MCF 10A (cell line): ENCODE measurements at regions of chr5 and their contacts with region 1.

Region 1: GRCh38 chr5:53430261-53431252 is 49.9 kb upstream of the FST start:
- DNase-seq: peak; percentile 69
- H3K4me3 Mint-ChIP-seq: no peak overlapping the region
- H3K27ac Mint-ChIP-seq: no peak overlapping the region
- H3K4me1 Mint-ChIP-seq: no peaks in the 10 kb centered on the region
- H3K27me3 Mint-ChIP-seq: no peaks in the 10 kb centered on the region
- CTCF ChIP-seq: peak; percentile 58

Region 2: DNA sequence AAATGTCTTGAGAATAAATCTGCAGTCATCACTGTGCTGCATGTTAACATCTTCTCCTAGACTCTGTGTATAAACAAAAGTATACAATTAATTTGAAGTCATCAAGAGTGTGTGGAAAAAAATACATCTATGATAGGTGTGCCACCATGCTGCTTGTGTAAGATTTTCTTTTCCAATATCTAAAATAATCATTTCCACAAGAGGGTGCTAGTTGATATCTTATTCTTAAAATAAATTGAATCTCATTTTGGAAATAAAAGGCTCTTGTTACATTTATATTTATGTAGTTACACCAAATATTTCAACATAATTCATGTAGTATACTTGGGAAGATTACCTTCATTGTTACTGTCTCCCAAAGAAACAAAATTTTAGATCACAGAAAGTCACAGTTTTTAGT is 306.9 kb before region 1 on chr5:
- CTCF ChIA-PET with region 1: interaction called, 3 read pairs
- POLR2A ChIA-PET with region 1: no interaction called
- intact Hi-C with region 1: loop called (anchors 5 kb)
- DNase-seq: peak; percentile 11
- H3K4me3 Mint-ChIP-seq: no peak overlapping the region
- H3K27ac Mint-ChIP-seq: no peak overlapping the region
- H3K4me1 Mint-ChIP-seq: peaks cover 5% of the 10 kb centered on the region
- H3K27me3 Mint-ChIP-seq: no peaks in the 10 kb centered on the region
- CTCF ChIP-seq: peak; percentile 12

Region 3: GRCh38 chr5:53170748-53171349 is 259.7 kb before region 1 on chr5:
- CTCF ChIA-PET with region 1: interaction called, 9 read pairs
- POLR2A ChIA-PET with region 1: interaction called, 3 read pairs
- intact Hi-C with region 1: loop called (anchors 1 kb)
- DNase-seq: peak; percentile 63
- H3K4me3 Mint-ChIP-seq: no peak overlapping the region
- H3K27ac Mint-ChIP-seq: no peak overlapping the region
- H3K4me1 Mint-ChIP-seq: peaks cover 5% of the 10 kb centered on the region
- H3K27me3 Mint-ChIP-seq: no peaks in the 10 kb centered on the region
- CTCF ChIP-seq: peak; percentile 77

Region 4: DNA sequence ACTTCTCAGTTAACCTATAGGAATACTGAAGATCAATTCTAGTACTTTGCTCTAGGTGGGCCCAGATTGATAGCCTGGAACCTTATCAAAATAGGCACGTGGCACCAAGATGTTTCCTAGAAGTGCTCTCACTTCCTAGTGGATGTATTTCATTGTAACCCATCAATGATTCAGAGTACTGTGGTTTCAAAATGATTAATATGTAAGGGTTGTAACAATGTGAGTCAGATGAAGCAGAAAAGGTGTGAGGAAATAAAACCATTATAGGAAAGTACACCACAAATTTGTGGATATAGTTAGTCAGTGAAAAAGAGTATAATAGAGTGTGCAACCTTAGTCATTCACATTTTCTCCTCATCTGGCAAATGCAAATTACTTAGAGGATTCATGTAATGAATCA is 127.5 kb before region 1 on chr5:
- CTCF ChIA-PET with region 1: interaction called, 3 read pairs
- POLR2A ChIA-PET with region 1: no interaction called
- intact Hi-C with region 1: loop called (anchors 1 kb)
- DNase-seq: peak; percentile 80
- H3K4me3 Mint-ChIP-seq: no peak overlapping the region
- H3K27ac Mint-ChIP-seq: no peak overlapping the region
- H3K4me1 Mint-ChIP-seq: peaks cover 17% of the 10 kb centered on the region
- H3K27me3 Mint-ChIP-seq: no peaks in the 10 kb centered on the region
- CTCF ChIP-seq: no peak

Region 5: GRCh38 chr5:53335115-53335514 is 95.4 kb before region 1 on chr5:
- CTCF ChIA-PET with region 1: no interaction called
- POLR2A ChIA-PET with region 1: interaction called, 5 read pairs
- intact Hi-C with region 1: loop called (anchors 1 kb)
- DNase-seq: peak; percentile 49
- H3K4me3 Mint-ChIP-seq: no peak overlapping the region
- H3K27ac Mint-ChIP-seq: no peak overlapping the region
- H3K4me1 Mint-ChIP-seq: peaks cover 34% of the 10 kb centered on the region
- H3K27me3 Mint-ChIP-seq: no peaks in the 10 kb centered on the region
- CTCF ChIP-seq: peak; percentile 15

Region 6: GRCh38 chr5:53578854-53579253 is 148.3 kb after region 1 on chr5:
- CTCF ChIA-PET with region 1: no interaction called
- POLR2A ChIA-PET with region 1: no interaction called
- intact Hi-C with region 1: no loop called
- DNase-seq: no peak
- H3K4me3 Mint-ChIP-seq: no peak overlapping the region
- H3K27ac Mint-ChIP-seq: no peak overlapping the region
- H3K4me1 Mint-ChIP-seq: peaks cover 11% of the 10 kb centered on the region
- H3K27me3 Mint-ChIP-seq: no peaks in the 10 kb centered on the region
- CTCF ChIP-seq: no peak

Region 7: DNA sequence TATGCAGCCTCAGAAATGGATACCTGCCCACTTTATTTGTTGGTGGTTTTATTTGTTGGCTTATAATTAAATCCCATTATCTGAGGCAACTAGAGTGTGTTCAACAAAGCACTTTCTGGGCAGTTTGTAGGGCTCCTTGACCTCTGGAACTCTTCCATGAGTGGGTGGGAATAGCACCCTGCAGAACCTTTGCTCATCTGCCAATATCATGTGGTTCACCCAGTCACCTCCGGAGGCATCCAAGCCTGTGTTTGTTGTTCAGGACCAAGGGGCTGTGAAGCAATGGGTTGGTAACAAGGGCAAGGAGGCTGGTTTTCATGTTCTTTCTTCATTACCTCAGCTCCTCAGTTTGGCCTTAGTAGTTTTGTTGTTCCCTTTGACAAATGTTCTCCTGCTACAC is 443.9 kb after region 1 on chr5:
- CTCF ChIA-PET with region 1: interaction called, 3 read pairs
- POLR2A ChIA-PET with region 1: no interaction called
- intact Hi-C with region 1: loop called (anchors 2 kb)
- DNase-seq: peak; percentile 43
- H3K4me3 Mint-ChIP-seq: no peak overlapping the region
- H3K27ac Mint-ChIP-seq: no peak overlapping the region
- H3K4me1 Mint-ChIP-seq: no peaks in the 10 kb centered on the region
- H3K27me3 Mint-ChIP-seq: no peaks in the 10 kb centered on the region
- CTCF ChIP-seq: no peak

Region 8: GRCh38 chr5:54217826-54218503 is 787.4 kb after region 1 on chr5:
- CTCF ChIA-PET with region 1: interaction called, 3 read pairs
- POLR2A ChIA-PET with region 1: no interaction called
- intact Hi-C with region 1: loop called (anchors 5 kb)
- DNase-seq: peak; percentile 71
- H3K4me3 Mint-ChIP-seq: no peak overlapping the region
- H3K27ac Mint-ChIP-seq: no peak overlapping the region
- H3K4me1 Mint-ChIP-seq: no peaks in the 10 kb centered on the region
- H3K27me3 Mint-ChIP-seq: no peaks in the 10 kb centered on the region
- CTCF ChIP-seq: peak; percentile 56